Transverse colon (tissue), 4 donors: ENCODE measurements at regions of chr4 and their contacts with region 1.

Region 1: DNA sequence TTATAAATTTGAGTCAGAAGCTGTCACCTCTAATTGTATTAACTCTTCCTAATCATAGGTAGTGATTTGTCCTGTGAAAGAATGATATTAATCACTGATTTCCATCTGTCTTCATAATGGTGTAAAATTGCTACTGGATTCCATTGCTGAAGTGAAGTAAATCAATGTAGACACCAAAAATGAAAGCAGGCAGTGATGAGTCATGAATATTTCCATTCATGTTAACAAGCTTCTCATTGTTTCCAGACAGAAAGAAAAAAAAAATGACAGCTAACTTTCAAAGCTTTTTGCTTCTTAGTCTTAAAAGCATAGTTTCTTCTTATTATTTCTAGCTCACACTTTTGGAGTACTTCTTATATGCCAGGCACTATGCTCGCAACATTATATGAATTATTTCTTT is 21.5 kb downstream of the FAM114A1 start:
- DNase-seq: no peak
- H3K4me3 ChIP-seq: no peak overlapping the region
- H3K27ac ChIP-seq: peak overlapping the region; percentile 10 to 73 (median 42)
- H3K4me1 ChIP-seq: peaks cover 14 to 54% (median 36%) of the 10 kb centered on the region in 4 donors
- H3K27me3 ChIP-seq: no peaks in the 10 kb centered on the region
- CTCF ChIP-seq: no peak
- EP300 ChIP-seq: no peak
- POLR2A ChIP-seq: no peak

Region 2: DNA sequence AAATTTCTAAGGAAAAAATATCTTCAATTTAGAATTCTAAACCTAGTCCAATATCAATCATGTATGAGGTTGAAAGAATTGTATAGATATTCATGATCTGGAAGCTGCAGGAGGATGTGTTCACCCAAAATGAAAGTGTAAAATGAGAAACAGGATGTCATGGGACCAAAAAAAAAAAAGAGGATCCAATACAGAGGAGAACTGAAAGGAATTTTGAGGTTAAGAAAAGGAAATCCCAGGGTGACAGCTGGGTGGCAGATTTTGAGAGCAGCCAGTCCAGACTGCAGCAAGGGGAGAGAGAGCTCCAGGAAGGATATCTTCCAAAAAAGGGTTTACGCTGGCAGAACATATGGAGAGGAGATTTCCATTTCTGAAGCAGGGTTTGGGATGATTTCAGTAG is 145.3 kb before region 1 on chr4:
- in situ Hi-C with region 1: no loop called
- intact Hi-C with region 1: no loop called
- DNase-seq: no peak
- H3K4me3 ChIP-seq: no peak overlapping the region
- H3K27ac ChIP-seq: no peak overlapping the region
- H3K4me1 ChIP-seq: no peaks in the 10 kb centered on the region
- H3K27me3 ChIP-seq: no peaks in the 10 kb centered on the region
- CTCF ChIP-seq: no peak
- EP300 ChIP-seq: no peak
- POLR2A ChIP-seq: no peak

Region 3: DNA sequence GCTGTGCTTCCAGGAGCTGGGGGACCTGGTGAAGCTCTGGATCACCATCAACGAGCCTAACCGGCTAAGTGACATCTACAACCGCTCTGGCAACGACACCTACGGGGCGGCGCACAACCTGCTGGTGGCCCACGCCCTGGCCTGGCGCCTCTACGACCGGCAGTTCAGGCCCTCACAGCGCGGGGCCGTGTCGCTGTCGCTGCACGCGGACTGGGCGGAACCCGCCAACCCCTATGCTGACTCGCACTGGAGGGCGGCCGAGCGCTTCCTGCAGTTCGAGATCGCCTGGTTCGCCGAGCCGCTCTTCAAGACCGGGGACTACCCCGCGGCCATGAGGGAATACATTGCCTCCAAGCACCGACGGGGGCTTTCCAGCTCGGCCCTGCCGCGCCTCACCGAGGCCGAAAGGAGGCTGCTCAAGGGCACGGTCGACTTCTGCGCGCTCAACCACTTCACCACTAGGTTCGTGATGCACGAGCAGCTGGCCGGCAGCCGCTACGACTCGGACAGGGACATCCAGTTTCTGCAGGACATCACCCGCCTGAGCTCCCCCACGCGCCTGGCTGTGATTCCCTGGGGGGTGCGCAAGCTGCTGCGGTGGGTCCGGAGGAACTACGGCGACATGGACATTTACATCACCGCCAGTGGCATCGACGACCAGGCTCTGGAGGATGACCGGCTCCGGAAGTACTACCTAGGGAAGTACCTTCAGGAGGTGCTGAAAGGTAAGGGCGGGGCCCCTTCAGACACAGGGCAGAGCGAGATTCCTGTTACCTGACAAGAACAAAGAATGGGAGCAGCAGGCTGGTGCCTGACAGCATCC is 557.8 kb after region 1 on chr4:
- in situ Hi-C with region 1: loop called in 1 of 4 experiments (anchors 25 kb)
- intact Hi-C with region 1: no loop called
- DNase-seq: peak; percentile 81
- H3K4me3 ChIP-seq: peak overlapping the region; percentile 29 to 51 (median 36)
- H3K27ac ChIP-seq: peak overlapping the region; percentile 73 to 84 (median 76)
- H3K4me1 ChIP-seq: peaks cover 4 to 14% (median 8%) of the 10 kb centered on the region in 4 donors
- H3K27me3 ChIP-seq: no peaks in the 10 kb centered on the region
- CTCF ChIP-seq: peak; percentile 4 to 66 (median 29)
- EP300 ChIP-seq: no peak
- POLR2A ChIP-seq: peak; percentile 64